ENCODE measurements at regions of chr1 and their contacts with region 1.

Region 1: DNA sequence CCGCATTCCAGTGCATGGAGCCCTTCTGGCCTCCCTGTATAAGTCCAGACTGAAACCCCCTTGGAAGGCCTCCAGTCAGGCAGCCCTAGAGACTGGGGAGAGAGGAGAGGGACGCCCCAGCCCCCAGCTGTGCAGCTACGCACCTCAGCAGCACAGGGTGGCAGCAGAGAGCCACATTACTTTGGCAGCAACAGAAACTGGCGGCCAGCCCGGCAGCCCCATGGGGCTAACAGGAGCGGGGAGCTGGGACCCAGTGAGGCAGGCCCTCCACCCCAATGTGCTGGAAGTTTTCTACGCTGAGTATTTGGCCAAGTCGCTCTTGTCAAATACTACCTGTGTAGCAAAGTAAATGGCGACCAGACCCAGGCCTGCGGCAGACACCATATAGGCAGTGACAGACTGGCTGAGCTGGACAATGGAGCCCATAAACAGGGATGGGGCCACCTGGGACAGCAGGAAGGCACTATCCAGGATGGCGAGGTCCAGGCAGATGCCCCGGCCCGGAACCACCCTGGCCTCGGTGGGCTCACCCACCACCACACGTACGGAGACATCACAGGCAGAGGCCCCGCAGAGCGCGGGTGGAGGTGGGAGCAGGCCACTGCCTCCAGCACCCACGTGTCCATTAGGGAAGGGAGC is 21.2 kb downstream of the SLC45A3 start:
- DNase-seq: peak; percentile 79
- H3K4me3 Mint-ChIP-seq: no peak overlapping the region
- H3K27ac Mint-ChIP-seq: no peak overlapping the region
- H3K4me1 Mint-ChIP-seq: peaks cover 4% of the 10 kb centered on the region
- H3K27me3 Mint-ChIP-seq: peaks cover 3% of the 10 kb centered on the region

Region 2: GRCh38 chr1:205528887-205529825 is 129.9 kb before region 1 on chr1:
- CTCF ChIA-PET with region 1: interaction called, 66 read pairs
- POLR2A ChIA-PET with region 1: no interaction called
- DNase-seq: peak; percentile 81
- H3K4me3 Mint-ChIP-seq: no peak overlapping the region
- H3K27ac Mint-ChIP-seq: no peak overlapping the region
- H3K4me1 Mint-ChIP-seq: peaks cover 4% of the 10 kb centered on the region
- H3K27me3 Mint-ChIP-seq: peaks cover 4% of the 10 kb centered on the region

Region 3: DNA sequence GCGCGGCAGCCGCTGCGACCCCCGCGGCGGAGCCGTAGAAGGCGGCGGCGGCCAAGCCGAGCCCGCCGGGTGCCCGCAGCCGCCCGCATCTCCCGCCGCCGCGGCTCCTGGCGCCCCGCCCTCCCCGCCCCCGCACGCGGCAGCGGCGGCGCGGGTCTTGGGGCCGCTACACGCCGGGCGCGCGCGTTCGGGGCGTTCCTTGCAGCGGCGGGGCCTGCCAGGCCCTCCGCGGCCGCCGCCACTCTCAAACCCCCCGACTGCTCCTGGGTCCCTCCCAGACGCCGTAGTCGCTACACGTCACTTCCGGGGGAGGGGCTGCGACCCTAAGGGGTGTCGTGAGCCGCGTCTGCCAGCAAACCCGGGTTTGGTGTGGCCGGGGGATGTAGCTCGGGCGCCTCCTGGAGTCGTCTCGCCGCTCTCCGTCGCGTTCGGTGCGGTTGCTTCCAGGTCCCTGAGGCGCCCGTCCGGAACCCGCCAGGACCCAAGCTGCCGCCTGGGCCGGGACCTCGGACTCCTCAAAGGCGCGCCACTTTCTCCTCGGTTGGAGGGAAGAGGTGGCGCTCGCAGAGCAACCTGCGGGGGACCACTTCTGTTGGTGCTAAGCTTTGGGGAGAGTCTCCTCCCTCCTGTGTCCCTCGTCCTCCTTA is 27.2 kb before region 1 on chr1 and contains the start of gene ELK4:
- CTCF ChIA-PET with region 1: interaction called, 50 read pairs
- POLR2A ChIA-PET with region 1: interaction called, 8 read pairs
- DNase-seq: peak; percentile 99
- H3K4me3 Mint-ChIP-seq: peak within 1 kb of the TSS; percentile 88
- H3K27ac Mint-ChIP-seq: peak within 1 kb of the TSS; percentile 96
- H3K4me1 Mint-ChIP-seq: peaks cover 37% of the 10 kb centered on the region
- H3K27me3 Mint-ChIP-seq: peaks cover 4% of the 10 kb centered on the region
- total RNA-seq, gene ELK4: 80.6 to 83.0 TPM

Region 4: DNA sequence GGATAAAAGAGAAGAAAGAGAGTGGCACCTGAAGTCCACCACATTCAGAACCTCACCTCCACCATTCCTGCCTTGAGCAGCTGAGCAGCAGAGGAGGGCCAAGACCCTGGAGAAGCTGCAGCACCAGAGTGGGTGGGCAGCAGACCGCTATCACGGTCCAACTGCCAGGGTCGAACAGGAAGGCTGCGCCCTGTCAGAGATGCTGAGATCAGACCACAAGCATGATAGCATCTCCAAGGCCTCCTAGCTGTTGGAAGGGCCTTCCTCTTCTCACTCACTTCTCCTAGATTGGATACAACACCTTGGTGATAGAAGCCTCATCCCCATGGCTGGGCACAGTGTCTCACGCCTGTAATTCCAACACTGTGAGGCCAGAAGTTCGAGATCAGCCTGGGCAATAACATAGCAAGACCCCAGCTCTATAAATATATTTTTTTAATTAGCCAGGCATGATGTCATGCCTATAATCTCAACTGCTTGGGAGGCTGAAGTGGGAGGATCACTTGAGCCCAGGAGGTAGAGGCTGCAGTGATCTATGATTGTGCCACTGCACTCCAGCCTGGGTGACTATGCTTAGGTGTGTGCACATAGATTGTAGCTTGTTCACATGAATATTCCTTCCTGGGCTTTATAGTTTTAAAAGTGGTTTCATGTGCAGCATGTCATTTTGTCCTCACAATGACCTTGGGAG is 33.5 kb after region 1 on chr1:
- CTCF ChIA-PET with region 1: interaction called, 10 read pairs
- POLR2A ChIA-PET with region 1: no interaction called
- DNase-seq: no peak
- H3K4me3 Mint-ChIP-seq: no peak overlapping the region
- H3K27ac Mint-ChIP-seq: no peak overlapping the region
- H3K4me1 Mint-ChIP-seq: peaks cover 2% of the 10 kb centered on the region
- H3K27me3 Mint-ChIP-seq: peaks cover 16% of the 10 kb centered on the region

Region 5: GRCh38 chr1:205782627-205783412 is 123.8 kb after region 1 on chr1:
- CTCF ChIA-PET with region 1: interaction called, 49 read pairs
- POLR2A ChIA-PET with region 1: interaction called, 4 read pairs
- DNase-seq: peak; percentile 32
- H3K4me3 Mint-ChIP-seq: no peak overlapping the region
- H3K27ac Mint-ChIP-seq: peak overlapping the region; percentile 10
- H3K4me1 Mint-ChIP-seq: peaks cover 15% of the 10 kb centered on the region
- H3K27me3 Mint-ChIP-seq: no peaks in the 10 kb centered on the region

Region 6: GRCh38 chr1:205977402-205978014 is 318.4 kb after region 1 on chr1:
- CTCF ChIA-PET with region 1: interaction called, 84 read pairs
- POLR2A ChIA-PET with region 1: interaction called, 4 read pairs
- DNase-seq: peak; percentile 76
- H3K4me3 Mint-ChIP-seq: no peak overlapping the region
- H3K27ac Mint-ChIP-seq: no peak overlapping the region
- H3K4me1 Mint-ChIP-seq: no peaks in the 10 kb centered on the region
- H3K27me3 Mint-ChIP-seq: peaks cover 9% of the 10 kb centered on the region